CD8-positive, alpha-beta memory T cell (primary cell): ENCODE measurements at regions of chr17 and their contacts with region 1.

Region 1: DNA sequence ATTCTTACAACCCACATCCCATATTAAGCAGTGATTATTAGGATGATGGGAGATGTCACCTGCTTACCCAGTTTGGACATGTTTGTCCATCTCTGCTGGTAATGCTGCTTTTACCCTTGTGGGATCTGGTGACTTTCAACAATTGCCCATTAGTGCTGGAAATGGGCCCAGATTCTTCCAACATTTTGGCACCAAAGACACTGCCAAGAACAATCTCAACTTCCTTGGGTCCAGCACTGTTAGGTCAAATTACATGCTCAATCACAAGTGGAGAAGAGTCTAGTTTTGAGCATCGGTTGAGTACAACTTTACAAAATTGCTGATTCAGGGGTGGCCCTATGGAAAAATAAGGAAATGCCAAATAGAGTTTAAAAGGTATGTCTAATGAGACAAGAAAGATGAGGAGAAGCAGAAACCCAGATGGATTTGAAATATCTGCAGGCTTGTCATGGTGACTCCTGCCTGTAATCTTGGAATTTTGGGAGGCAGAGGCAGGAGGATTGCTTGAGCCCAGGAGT is 13.0 kb upstream of the ZFP3 start:
- DNase-seq: no peak
- H3K4me3 ChIP-seq: no peak overlapping the region
- H3K4me3 Mint-ChIP-seq: no peak overlapping the region
- H3K27ac ChIP-seq: no peak overlapping the region
- H3K27ac Mint-ChIP-seq: no peak overlapping the region
- H3K4me1 ChIP-seq: no peaks in the 10 kb centered on the region
- H3K4me1 Mint-ChIP-seq: peaks cover 0 to 7% (median 6%) of the 10 kb centered on the region in 3 donors
- H3K27me3 ChIP-seq: no peaks in the 10 kb centered on the region
- H3K27me3 Mint-ChIP-seq: peaks cover 0 to 1% of the 10 kb centered on the region in 2 donors

Region 2: GRCh38 chr17:4980644-4981216 is 84.6 kb before region 1 on chr17:
- CTCF ChIA-PET with region 1: interaction called, 10 read pairs
- POLR2A ChIA-PET with region 1: no interaction called
- DNase-seq: peak in 3 of 5 donors; percentile 26 to 59 (median 48)
- H3K4me3 ChIP-seq: no peak overlapping the region
- H3K4me3 Mint-ChIP-seq: peak overlapping the region in 1 of 7 donors; percentile 33
- H3K27ac ChIP-seq: no peak overlapping the region
- H3K27ac Mint-ChIP-seq: peak overlapping the region; percentile 55 to 89 (median 78)
- H3K4me1 ChIP-seq: peaks cover 11% of the 10 kb centered on the region
- H3K4me1 Mint-ChIP-seq: peaks cover 12 to 21% (median 19%) of the 10 kb centered on the region in 3 donors
- H3K27me3 ChIP-seq: no peaks in the 10 kb centered on the region
- H3K27me3 Mint-ChIP-seq: no peaks in the 10 kb centered on the region

Region 3: DNA sequence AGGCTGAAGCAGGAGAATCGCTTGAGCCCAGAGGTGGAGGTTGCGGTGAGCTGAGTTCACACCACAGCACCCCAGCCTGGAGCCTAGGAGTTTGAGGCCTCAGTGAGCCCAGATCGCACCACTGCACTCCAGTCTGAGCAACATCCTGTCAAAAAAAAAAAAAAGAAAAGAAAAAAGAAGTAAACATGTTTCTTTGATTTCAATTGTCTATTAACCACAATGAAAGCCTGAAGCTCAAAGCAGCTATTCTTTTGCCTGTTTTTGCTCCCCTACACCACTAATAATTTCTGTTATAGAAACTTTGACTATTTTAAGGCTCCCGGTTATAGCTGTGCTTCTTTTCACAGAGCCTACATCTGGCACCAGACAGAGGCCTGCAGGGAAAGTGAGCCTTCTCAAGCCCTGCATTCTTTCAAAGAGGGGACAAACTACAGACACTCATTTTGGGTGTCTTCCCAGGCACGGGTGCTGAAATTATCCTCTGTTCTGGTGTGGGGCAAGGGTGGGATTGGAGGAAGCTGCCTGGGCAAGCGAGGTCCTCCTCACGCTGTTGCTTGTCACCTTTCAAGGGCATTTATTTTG is 15.9 kb before region 1 on chr17:
- CTCF ChIA-PET with region 1: interaction called, 24 read pairs
- POLR2A ChIA-PET with region 1: no interaction called
- DNase-seq: peak; percentile 65 to 91 (median 78)
- H3K4me3 ChIP-seq: peak overlapping the region; percentile 6
- H3K4me3 Mint-ChIP-seq: peak overlapping the region; percentile 62 to 84 (median 72)
- H3K27ac ChIP-seq: peak overlapping the region; percentile 49
- H3K27ac Mint-ChIP-seq: peak overlapping the region; percentile 93 to 99 (median 96)
- H3K4me1 ChIP-seq: peaks cover 54% of the 10 kb centered on the region
- H3K4me1 Mint-ChIP-seq: peaks cover 32 to 60% (median 46%) of the 10 kb centered on the region in 3 donors
- H3K27me3 ChIP-seq: no peaks in the 10 kb centered on the region
- H3K27me3 Mint-ChIP-seq: no peaks in the 10 kb centered on the region

Region 4: DNA sequence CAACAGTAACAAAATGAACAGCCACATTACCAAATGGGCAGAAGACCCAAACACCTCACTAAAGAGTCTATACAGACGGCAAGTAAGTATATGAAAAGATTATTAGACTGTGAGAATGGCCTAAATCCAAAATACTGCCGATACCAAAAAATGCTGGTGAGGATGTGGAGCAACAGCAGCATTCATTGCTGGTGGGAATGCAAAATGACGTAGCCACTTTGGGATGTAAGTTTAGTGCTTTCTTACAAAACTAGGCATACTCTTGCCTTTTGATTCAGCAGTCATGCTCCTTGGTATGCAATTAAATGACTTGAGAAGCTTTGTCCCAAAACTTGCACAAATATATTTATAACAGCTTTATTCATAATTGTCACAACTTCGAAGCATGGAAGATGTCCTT is 260.6 kb after region 1 on chr17:
- CTCF ChIA-PET with region 1: no interaction called
- POLR2A ChIA-PET with region 1: no interaction called
- DNase-seq: no peak
- H3K4me3 ChIP-seq: no peak overlapping the region
- H3K4me3 Mint-ChIP-seq: no peak overlapping the region
- H3K27ac ChIP-seq: no peak overlapping the region
- H3K27ac Mint-ChIP-seq: peak overlapping the region in 4 of 8 donors; percentile 2 to 74 (median 14)
- H3K4me1 ChIP-seq: peaks cover 20% of the 10 kb centered on the region
- H3K4me1 Mint-ChIP-seq: peaks cover 35 to 59% (median 51%) of the 10 kb centered on the region in 3 donors
- H3K27me3 ChIP-seq: no peaks in the 10 kb centered on the region
- H3K27me3 Mint-ChIP-seq: no peaks in the 10 kb centered on the region